ENCODE measurements at regions of chr7 and their contacts with region 1.

Region 1: GRCh38 chr7:19117091-19117869 is at the start of gene TWIST1:
- DNase-seq: peak; percentile 77
- ATAC-seq: peak; percentile 78
- H3K4me3 ChIP-seq: peak within 1 kb of the TSS; percentile 99
- H3K27ac ChIP-seq: no peak within 1 kb of the TSS
- H3K4me1 ChIP-seq: peaks cover 16% of the 10 kb centered on the region
- H3K27me3 ChIP-seq: no peaks in the 10 kb centered on the region
- CTCF ChIP-seq: no peak
- total RNA-seq, gene TWIST1: 15.7 and 22.3 TPM in 2 replicates

Region 2: DNA sequence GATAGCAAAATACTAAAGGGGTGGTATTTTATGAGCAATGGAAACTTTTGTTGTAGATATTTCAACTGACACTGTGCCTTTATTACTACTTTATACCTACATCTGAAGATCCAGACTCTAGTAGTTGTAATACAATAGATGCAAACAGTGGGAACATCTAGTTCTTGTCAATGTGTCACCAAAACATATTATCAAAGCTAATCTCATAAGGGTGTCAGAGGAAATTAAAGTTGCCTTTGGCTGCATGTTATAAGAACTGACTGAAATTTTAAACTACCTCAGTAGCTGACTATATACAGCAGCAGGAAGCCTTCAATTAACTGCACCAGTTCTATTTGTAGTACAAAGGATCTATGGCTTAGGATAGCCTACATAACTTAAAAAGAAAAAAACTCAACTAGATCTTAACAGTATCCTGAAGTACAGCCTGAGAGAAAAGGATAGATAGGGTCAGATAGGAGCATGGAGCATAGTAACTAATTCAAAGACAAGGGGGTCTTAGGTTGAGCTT is 590.9 kb before region 1 on chr7:
- CTCF ChIA-PET with region 1: no interaction called
- POLR2A ChIA-PET with region 1: interaction called, 14 read pairs
- intact Hi-C with region 1: no loop called
- DNase-seq: no peak
- ATAC-seq: no peak
- H3K4me3 ChIP-seq: no peak overlapping the region
- H3K27ac ChIP-seq: no peak overlapping the region
- H3K4me1 ChIP-seq: peaks cover 1% of the 10 kb centered on the region
- H3K27me3 ChIP-seq: no peaks in the 10 kb centered on the region
- CTCF ChIP-seq: no peak

Region 3: DNA sequence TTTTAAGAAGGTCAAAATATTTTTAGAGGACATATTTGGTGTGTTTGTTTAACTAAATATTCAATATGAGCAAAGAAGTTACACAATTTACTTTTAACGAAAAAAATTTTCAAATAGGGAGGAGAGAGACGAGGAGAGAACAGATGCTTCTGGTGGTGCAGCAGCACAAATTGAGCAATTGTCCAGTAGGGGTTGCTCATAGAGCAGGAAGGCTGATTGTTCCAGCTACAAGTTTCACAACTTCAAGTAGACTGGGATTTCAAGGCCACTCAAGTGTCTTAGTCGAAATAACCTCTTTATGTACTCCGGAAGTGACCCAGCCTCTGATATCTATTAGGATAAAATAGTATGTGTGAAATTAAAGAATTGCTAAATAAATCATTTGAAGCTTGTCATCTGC is 423.9 kb before region 1 on chr7:
- CTCF ChIA-PET with region 1: interaction called, 4 read pairs
- POLR2A ChIA-PET with region 1: interaction called, 3 read pairs
- intact Hi-C with region 1: loop called (anchors 1 kb)
- DNase-seq: peak; percentile 71
- ATAC-seq: peak; percentile 87
- H3K4me3 ChIP-seq: no peak overlapping the region
- H3K27ac ChIP-seq: no peak overlapping the region
- H3K4me1 ChIP-seq: no peaks in the 10 kb centered on the region
- H3K27me3 ChIP-seq: no peaks in the 10 kb centered on the region
- CTCF ChIP-seq: peak; percentile 88

Region 4: GRCh38 chr7:19024261-19024660 is 93.0 kb before region 1 on chr7:
- CTCF ChIA-PET with region 1: no interaction called
- POLR2A ChIA-PET with region 1: no interaction called
- intact Hi-C with region 1: loop called (anchors 10 kb)
- DNase-seq: peak; percentile 25
- ATAC-seq: 0 out of 2 replicates have a peak, but pooled peaks have one; percentile 12
- H3K4me3 ChIP-seq: no peak overlapping the region
- H3K27ac ChIP-seq: no peak overlapping the region
- H3K4me1 ChIP-seq: peaks cover 35% of the 10 kb centered on the region
- H3K27me3 ChIP-seq: no peaks in the 10 kb centered on the region
- CTCF ChIP-seq: no peak

Region 5: GRCh38 chr7:19294619-19295018 is 177.3 kb after region 1 on chr7:
- CTCF ChIA-PET with region 1: interaction called, 7 read pairs
- POLR2A ChIA-PET with region 1: no interaction called
- intact Hi-C with region 1: loop called (anchors 10 kb)
- DNase-seq: peak; percentile 87
- ATAC-seq: peak; percentile 91
- H3K4me3 ChIP-seq: no peak overlapping the region
- H3K27ac ChIP-seq: peak overlapping the region; percentile 10; the same call in 1 of the 2 replicates
- H3K4me1 ChIP-seq: peaks cover 12% of the 10 kb centered on the region
- H3K27me3 ChIP-seq: no peaks in the 10 kb centered on the region
- CTCF ChIP-seq: no peak

Region 6: DNA sequence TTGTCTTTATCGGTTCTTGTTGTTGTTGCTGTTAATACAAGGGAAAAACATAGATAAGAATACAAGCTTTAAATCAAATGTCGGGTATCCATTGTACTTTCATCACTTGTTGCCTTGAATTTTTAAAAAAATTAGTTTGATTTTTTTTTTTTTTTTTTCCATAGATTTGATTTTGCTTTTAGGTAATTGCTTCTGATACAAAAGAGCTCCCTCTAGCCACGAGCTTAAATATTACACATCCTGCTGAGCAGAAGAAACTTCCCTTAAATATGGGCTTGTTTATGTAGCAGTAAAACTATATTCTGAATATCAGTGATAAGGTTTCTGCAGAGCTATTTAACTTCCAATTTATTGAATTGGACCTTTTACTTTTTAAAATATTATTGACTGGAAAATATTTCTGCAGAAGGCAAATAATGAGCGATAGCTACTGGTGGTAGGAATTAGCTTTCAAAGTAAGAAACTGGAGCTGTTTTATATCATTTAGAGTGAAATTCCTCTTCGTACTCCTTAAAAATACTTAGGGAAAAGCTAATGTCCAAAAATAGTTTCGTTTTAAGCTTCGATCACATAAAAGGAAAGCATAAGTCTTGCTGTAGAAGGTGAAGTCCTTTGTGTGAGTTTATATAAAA is 374.7 kb after region 1 on chr7:
- CTCF ChIA-PET with region 1: interaction called, 28 read pairs
- POLR2A ChIA-PET with region 1: interaction called, 4 read pairs
- intact Hi-C with region 1: loop called (anchors 5 kb)
- DNase-seq: peak; percentile 66
- ATAC-seq: 0 out of 2 replicates have a peak, but pooled peaks have one; percentile 35
- H3K4me3 ChIP-seq: no peak overlapping the region
- H3K27ac ChIP-seq: no peak overlapping the region
- H3K4me1 ChIP-seq: no peaks in the 10 kb centered on the region
- H3K27me3 ChIP-seq: 0 out of 2 replicates have a peak, but pooled peaks cover 4% of the 10 kb centered on the region
- CTCF ChIP-seq: peak; percentile 76

Region 7: GRCh38 chr7:19665399-19666008 is 548.2 kb after region 1 on chr7:
- CTCF ChIA-PET with region 1: interaction called, 7 read pairs
- POLR2A ChIA-PET with region 1: no interaction called
- intact Hi-C with region 1: loop called (anchors 1 kb)
- DNase-seq: peak; percentile 50
- ATAC-seq: peak; percentile 51; the same call in 1 of the 2 replicates
- H3K4me3 ChIP-seq: no peak overlapping the region
- H3K27ac ChIP-seq: no peak overlapping the region
- H3K4me1 ChIP-seq: peaks cover 12% of the 10 kb centered on the region
- H3K27me3 ChIP-seq: peaks cover 7% of the 10 kb centered on the region; the same call in 1 of the 2 replicates
- CTCF ChIP-seq: peak; percentile 77

Measured in PC-3 (cell line).